Activated CD4-positive, alpha-beta T cell treated with anti-CD3 and anti-CD28 coated beads for 36 hours (primary cell): ENCODE measurements at regions of chr10 and their contacts with region 1.

Region 1: DNA sequence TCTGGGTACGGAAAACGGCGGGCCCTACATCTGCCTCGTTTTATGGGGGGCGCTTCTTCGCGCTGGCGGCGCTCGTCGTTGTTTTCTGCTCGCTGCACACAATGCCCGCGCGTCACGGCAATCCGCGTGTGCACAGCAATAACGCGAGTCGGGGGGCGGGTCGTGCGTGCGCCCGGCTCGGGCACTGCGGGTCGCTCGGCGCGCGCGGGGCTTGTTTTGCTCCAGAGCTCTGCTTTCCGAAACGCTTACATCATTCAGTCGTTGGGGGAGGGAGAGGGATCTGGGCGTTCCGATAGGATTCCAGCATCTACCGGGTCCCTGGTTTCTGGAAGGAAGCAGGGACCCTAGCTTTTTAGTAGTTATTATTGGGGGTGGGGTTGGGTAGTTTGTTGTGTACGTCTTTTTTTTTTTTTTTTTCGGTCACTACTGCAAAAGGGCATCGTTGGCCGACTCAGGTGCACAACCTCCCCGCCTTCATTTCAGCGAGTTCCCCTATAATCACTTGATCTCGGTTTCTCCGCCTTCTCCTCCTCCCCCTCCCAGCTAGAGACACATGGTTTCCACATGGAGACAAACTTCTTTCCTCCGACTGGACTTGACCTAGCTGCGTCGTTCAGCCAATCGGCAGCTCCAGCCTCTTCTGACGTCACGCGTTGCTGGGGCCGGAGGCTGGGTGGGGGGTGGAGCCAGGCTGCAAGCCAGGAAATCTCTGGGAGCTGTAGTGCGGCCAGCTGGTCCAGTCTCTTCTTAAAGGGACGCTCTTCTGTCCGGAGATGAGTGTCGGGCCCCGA is 3.5 kb downstream of the MXI1 start:
- DNase-seq: peak; percentile 96
- ATAC-seq: peak; percentile 71
- H3K4me3 Mint-ChIP-seq: peak overlapping the region; percentile 86
- H3K27ac Mint-ChIP-seq: peak overlapping the region; percentile 96
- H3K4me1 Mint-ChIP-seq: peaks cover 53% of the 10 kb centered on the region
- H3K27me3 Mint-ChIP-seq: no peaks in the 10 kb centered on the region

Region 2: GRCh38 chr10:109883859-109884771 is 326.8 kb before region 1 on chr10:
- CTCF ChIA-PET with region 1: interaction called, 4 read pairs
- POLR2A ChIA-PET with region 1: no interaction called
- intact Hi-C with region 1: loop called in 1 of 2 experiments (anchors 5 kb)
- DNase-seq: peak; percentile 73
- ATAC-seq: peak; percentile 71
- H3K4me3 Mint-ChIP-seq: no peak overlapping the region
- H3K27ac Mint-ChIP-seq: no peak overlapping the region
- H3K4me1 Mint-ChIP-seq: peaks cover 10% of the 10 kb centered on the region
- H3K27me3 Mint-ChIP-seq: no peaks in the 10 kb centered on the region

Region 3: DNA sequence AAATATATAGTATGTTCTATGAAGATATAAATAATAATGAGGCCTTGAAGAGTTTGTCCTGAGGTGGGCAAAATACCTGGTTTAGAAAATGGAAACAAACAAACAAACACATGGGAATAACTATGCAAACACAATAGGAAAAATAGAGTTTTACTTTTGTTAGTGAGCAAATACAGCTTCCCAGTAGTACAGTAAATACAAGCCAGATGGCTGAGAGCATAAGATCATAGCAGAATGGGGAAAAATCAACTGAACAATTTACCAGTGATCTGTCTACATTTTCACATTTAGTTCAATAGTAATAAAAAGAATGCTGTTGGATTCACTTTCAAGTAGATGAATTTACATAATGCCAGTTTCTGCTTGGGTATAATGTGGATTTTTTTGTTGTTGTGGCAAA is 158.0 kb before region 1 on chr10:
- CTCF ChIA-PET with region 1: no interaction called
- POLR2A ChIA-PET with region 1: no interaction called
- intact Hi-C with region 1: no loop called
- DNase-seq: no peak
- ATAC-seq: no peak
- H3K4me3 Mint-ChIP-seq: no peak overlapping the region
- H3K27ac Mint-ChIP-seq: peak overlapping the region; percentile 44
- H3K4me1 Mint-ChIP-seq: peaks cover 67% of the 10 kb centered on the region
- H3K27me3 Mint-ChIP-seq: no peaks in the 10 kb centered on the region

Region 4: GRCh38 chr10:110067960-110068770 is 142.7 kb before region 1 on chr10:
- CTCF ChIA-PET with region 1: no interaction called
- POLR2A ChIA-PET with region 1: no interaction called
- intact Hi-C with region 1: loop called in 1 of 2 experiments (anchors 2 kb)
- DNase-seq: peak; percentile 71
- ATAC-seq: peak; percentile 89
- H3K4me3 Mint-ChIP-seq: peak overlapping the region; percentile 57
- H3K27ac Mint-ChIP-seq: peak overlapping the region; percentile 90
- H3K4me1 Mint-ChIP-seq: peaks cover 88% of the 10 kb centered on the region
- H3K27me3 Mint-ChIP-seq: no peaks in the 10 kb centered on the region

Region 5: GRCh38 chr10:110190170-110190569 is 20.7 kb before region 1 on chr10:
- CTCF ChIA-PET with region 1: interaction called, 12 read pairs
- POLR2A ChIA-PET with region 1: no interaction called
- intact Hi-C with region 1: no loop called
- DNase-seq: no peak
- ATAC-seq: no peak
- H3K4me3 Mint-ChIP-seq: no peak overlapping the region
- H3K27ac Mint-ChIP-seq: no peak overlapping the region
- H3K4me1 Mint-ChIP-seq: peaks cover 2% of the 10 kb centered on the region
- H3K27me3 Mint-ChIP-seq: peaks cover 20% of the 10 kb centered on the region

Region 6: DNA sequence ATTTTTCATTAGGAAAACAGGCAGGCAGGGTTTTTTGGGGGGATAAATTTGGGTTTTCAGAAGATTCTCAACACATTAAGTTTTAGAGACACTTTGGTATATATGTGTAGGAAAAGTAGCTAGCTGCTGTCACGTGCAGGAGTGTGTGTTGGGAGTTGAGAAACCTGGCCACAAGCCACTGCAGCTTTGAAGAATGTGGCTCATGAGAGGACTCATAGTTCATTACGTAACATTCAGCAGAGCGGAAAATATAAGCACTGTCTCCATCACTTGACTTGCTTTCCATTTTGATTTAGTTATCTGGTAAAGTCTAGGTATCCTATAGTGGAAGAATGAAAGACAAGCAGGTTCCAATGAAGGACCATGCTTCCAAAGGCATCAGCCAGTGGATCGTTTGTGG is 62.6 kb after region 1 on chr10:
- CTCF ChIA-PET with region 1: interaction called, 48 read pairs
- POLR2A ChIA-PET with region 1: no interaction called
- intact Hi-C with region 1: no loop called
- DNase-seq: peak; percentile 65
- ATAC-seq: peak; percentile 57
- H3K4me3 Mint-ChIP-seq: no peak overlapping the region
- H3K27ac Mint-ChIP-seq: peak overlapping the region; percentile 66
- H3K4me1 Mint-ChIP-seq: peaks cover 51% of the 10 kb centered on the region
- H3K27me3 Mint-ChIP-seq: no peaks in the 10 kb centered on the region

Region 7: GRCh38 chr10:110304780-110305421 is 94.0 kb after region 1 on chr10 and contains the start of gene SMNDC1:
- CTCF ChIA-PET with region 1: no interaction called
- POLR2A ChIA-PET with region 1: no interaction called
- intact Hi-C with region 1: loop called (anchors 1 kb)
- DNase-seq: peak; percentile 98
- ATAC-seq: peak; percentile 93
- H3K4me3 Mint-ChIP-seq: peak within 1 kb of the TSS; percentile 95
- H3K27ac Mint-ChIP-seq: peak within 1 kb of the TSS; percentile 98
- H3K4me1 Mint-ChIP-seq: peaks cover 42% of the 10 kb centered on the region
- H3K27me3 Mint-ChIP-seq: no peaks in the 10 kb centered on the region
- total RNA-seq, gene SMNDC1: 44.2 to 56.7 TPM

Region 8: GRCh38 chr10:110567201-110568054 is 356.6 kb after region 1 on chr10 and contains the start of gene SMC3:
- CTCF ChIA-PET with region 1: no interaction called
- POLR2A ChIA-PET with region 1: no interaction called
- intact Hi-C with region 1: loop called in 1 of 2 experiments (anchors 5 kb)
- DNase-seq: peak; percentile 95
- ATAC-seq: peak; percentile 84
- H3K4me3 Mint-ChIP-seq: peak within 1 kb of the TSS; percentile 93
- H3K27ac Mint-ChIP-seq: peak within 1 kb of the TSS; percentile 99
- H3K4me1 Mint-ChIP-seq: peaks cover 35% of the 10 kb centered on the region
- H3K27me3 Mint-ChIP-seq: peaks cover 13% of the 10 kb centered on the region
- total RNA-seq, gene SMC3: 76.8 to 83.5 TPM